PC-3 (cell line): ENCODE measurements at regions of chr21 and their contacts with region 1.

Region 1: DNA sequence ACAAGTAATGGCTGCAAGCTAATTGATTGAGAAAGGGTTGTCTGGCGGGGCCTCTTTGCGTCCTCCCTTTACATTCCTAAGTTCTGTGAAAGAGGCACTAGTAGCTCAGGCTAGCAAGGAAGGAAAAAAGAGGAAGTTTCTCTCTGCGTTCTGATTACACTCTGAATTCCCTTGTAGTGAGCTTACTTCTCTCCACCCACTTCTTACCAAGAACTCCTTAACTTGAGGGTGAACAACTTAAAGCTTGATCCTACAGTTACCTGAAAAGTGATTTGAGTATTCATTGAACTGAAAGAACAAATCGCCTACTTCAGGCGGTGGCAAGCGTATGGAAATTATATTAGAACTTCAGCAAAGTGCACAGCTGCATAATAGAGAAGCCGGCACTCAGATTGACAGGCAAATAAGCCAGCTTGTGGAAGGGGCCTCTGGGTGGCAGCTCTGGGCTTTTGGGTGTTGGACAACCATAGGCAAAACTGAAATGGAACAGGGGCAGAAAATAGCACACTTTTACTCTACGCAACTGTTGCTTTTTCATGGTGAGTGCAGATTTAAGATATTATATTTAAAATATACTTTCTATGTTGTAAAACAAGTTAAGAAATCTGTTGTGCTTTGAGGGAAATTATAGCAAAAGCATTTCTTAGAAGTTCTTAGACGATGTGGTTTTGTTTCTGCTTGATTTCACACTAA is 464.5 kb downstream of the USP25 start:
- DNase-seq: peak; percentile 35
- ATAC-seq: peak; percentile 75
- H3K4me3 ChIP-seq: peak overlapping the region; percentile 48
- H3K27ac ChIP-seq: peak overlapping the region; percentile 2; the same call in 1 of the 2 replicates
- H3K4me1 ChIP-seq: no peaks in the 10 kb centered on the region
- H3K27me3 ChIP-seq: peaks cover 48% of the 10 kb centered on the region
- CTCF ChIP-seq: no peak; the same call in 1 of the 2 replicates

Region 2: DNA sequence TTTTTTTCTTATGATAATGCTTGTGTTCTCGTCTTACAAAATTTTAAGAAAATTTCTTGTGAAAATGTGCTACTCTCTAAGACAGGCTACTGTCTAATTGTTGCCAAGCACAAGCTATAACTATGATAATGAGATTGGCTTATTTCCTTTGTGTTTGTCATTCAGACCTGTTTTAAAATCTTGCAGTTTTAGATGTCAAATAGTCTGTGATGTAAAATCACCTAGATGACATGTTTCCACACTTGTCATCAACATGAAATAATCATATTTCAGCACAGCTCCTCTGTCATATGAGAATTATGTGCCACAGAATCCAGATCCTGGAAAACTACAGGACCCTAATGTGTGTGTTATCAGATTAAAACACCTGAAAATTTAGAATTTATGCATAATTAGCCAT is 75.2 kb after region 1 on chr21:
- CTCF ChIA-PET with region 1: no interaction called
- POLR2A ChIA-PET with region 1: no interaction called
- intact Hi-C with region 1: loop called (anchors 5 kb)
- DNase-seq: no peak
- ATAC-seq: no peak
- H3K4me3 ChIP-seq: no peak overlapping the region
- H3K27ac ChIP-seq: no peak overlapping the region
- H3K4me1 ChIP-seq: no peaks in the 10 kb centered on the region
- H3K27me3 ChIP-seq: peaks cover 27% of the 10 kb centered on the region; the same call in 1 of the 2 replicates
- CTCF ChIP-seq: no peak